Caco-2 (cell line): ENCODE measurements at regions of chr7 and their contacts with region 1.

Region 1: DNA sequence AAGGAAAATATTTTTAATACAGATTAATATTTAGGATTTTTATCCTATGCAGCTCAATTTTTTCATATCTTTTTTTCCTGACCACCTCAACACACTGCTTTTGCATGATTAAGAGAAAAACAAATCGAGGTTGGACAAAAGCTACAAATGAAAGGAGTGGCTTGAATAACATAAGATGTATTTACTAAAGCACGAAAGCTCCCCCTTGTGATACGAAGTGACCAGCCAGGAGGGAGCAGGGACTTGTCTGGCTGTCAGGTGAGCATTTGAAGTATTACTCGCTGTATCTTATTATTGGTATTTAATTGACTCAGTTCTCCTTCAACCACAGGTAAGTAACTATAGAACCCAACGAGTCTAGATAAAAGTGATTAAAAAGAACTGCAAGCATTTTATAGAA is 265.2 kb upstream of the PHF14 start:
- DNase-seq: peak; percentile 31 to 44
- H3K4me3 ChIP-seq: no peak overlapping the region
- H3K4me3 Mint-ChIP-seq: no peak overlapping the region
- H3K27ac Mint-ChIP-seq: no peak overlapping the region
- H3K4me1 ChIP-seq: no peaks in the 10 kb centered on the region
- H3K4me1 Mint-ChIP-seq: no peaks in the 10 kb centered on the region
- H3K27me3 ChIP-seq: no peaks in the 10 kb centered on the region
- H3K27me3 Mint-ChIP-seq: peaks cover 2% of the 10 kb centered on the region
- CTCF ChIP-seq: peak; percentile 46 to 64

Region 2: DNA sequence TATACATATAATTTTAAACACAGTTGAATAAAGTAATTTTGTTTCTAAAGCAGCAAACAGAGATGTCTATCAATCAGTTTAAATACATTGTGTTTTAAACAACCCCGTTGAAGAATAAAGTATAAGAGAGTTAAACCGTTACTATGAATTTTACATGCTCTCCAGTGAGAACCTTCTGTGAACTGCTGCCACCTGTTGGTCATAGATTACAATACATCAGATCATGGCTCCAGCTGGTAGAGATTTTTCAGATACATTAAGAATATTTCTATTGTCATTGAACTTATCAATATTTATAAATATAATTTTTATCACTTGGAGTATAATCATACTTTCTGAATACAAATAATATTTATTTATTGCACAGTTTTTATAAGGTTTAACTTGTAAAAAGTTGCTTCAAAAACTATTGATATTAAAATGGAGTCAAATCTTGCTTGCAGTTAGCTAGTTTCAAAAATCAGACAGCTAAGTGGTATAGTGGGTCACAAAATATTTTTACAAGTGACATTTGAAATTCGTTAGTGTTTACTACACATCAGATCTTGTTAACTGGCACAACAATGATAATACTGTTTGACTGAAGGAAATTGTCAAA is 295.9 kb before region 1 on chr7:
- CTCF ChIA-PET with region 1: no interaction called
- POLR2A ChIA-PET with region 1: no interaction called
- intact Hi-C with region 1: loop called (anchors 10 kb)
- DNase-seq: peak in 1 of 2 experiments; percentile 52
- H3K4me3 ChIP-seq: no peak overlapping the region
- H3K4me3 Mint-ChIP-seq: no peak overlapping the region
- H3K27ac Mint-ChIP-seq: no peak overlapping the region
- H3K4me1 ChIP-seq: no peaks in the 10 kb centered on the region
- H3K4me1 Mint-ChIP-seq: no peaks in the 10 kb centered on the region
- H3K27me3 ChIP-seq: no peaks in the 10 kb centered on the region
- H3K27me3 Mint-ChIP-seq: peaks cover 3% of the 10 kb centered on the region
- CTCF ChIP-seq: peak; percentile 48 to 69

Region 3: GRCh38 chr7:10475940-10476641 is 232.4 kb before region 1 on chr7:
- CTCF ChIA-PET with region 1: no interaction called
- POLR2A ChIA-PET with region 1: no interaction called
- intact Hi-C with region 1: loop called (anchors 1 kb)
- DNase-seq: no peak
- H3K4me3 ChIP-seq: no peak overlapping the region
- H3K4me3 Mint-ChIP-seq: no peak overlapping the region
- H3K27ac Mint-ChIP-seq: no peak overlapping the region
- H3K4me1 ChIP-seq: no peaks in the 10 kb centered on the region
- H3K4me1 Mint-ChIP-seq: no peaks in the 10 kb centered on the region
- H3K27me3 ChIP-seq: no peaks in the 10 kb centered on the region
- H3K27me3 Mint-ChIP-seq: peaks cover 6% of the 10 kb centered on the region
- CTCF ChIP-seq: no peak

Region 4: DNA sequence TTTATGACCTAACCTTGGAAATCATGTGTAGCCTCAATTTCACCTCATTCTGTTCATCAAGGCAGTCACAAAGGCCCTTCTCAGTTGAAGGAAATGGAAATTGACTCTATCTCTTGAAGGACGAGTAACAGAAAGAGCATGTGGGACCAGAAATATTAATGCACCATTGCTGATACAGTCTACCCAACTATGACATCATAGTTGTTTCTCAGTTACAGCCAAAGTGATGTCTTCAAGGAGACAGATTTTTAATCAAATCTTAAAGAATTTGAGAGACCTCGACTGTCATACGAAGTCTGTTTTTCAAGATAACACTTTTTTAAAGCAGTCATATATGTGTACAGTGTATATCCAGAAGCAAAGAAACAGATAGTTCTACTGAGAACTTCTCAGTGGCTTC is 70.5 kb before region 1 on chr7:
- CTCF ChIA-PET with region 1: no interaction called
- POLR2A ChIA-PET with region 1: no interaction called
- intact Hi-C with region 1: loop called (anchors 1 kb)
- DNase-seq: no peak
- H3K4me3 ChIP-seq: no peak overlapping the region
- H3K4me3 Mint-ChIP-seq: no peak overlapping the region
- H3K27ac Mint-ChIP-seq: no peak overlapping the region
- H3K4me1 ChIP-seq: no peaks in the 10 kb centered on the region
- H3K4me1 Mint-ChIP-seq: no peaks in the 10 kb centered on the region
- H3K27me3 ChIP-seq: no peaks in the 10 kb centered on the region
- H3K27me3 Mint-ChIP-seq: no peaks in the 10 kb centered on the region
- CTCF ChIP-seq: no peak

Region 5: DNA sequence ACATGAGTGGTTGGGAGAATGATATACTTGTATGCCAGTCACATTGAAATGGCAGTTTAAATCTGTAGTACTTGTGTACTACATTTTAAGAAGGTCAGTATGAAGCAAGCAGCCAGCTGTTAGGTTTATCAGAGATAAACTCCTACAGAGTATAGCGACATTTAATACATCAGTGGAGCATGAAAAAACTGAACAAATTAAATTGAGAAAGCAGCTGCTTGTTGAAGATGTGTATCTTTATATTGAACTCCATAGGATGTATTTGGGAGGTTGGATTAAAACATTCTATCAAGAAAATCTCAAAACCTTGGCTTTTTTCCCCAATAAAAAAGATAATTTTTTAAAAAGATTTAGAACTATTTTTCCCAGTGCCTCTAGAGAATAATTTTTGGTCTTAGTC is 313.0 kb after region 1 on chr7:
- CTCF ChIA-PET with region 1: no interaction called
- POLR2A ChIA-PET with region 1: no interaction called
- intact Hi-C with region 1: no loop called
- DNase-seq: no peak
- H3K4me3 ChIP-seq: no peak overlapping the region
- H3K4me3 Mint-ChIP-seq: no peak overlapping the region
- H3K27ac Mint-ChIP-seq: no peak overlapping the region
- H3K4me1 ChIP-seq: no peaks in the 10 kb centered on the region
- H3K4me1 Mint-ChIP-seq: no peaks in the 10 kb centered on the region
- H3K27me3 ChIP-seq: no peaks in the 10 kb centered on the region
- H3K27me3 Mint-ChIP-seq: no peaks in the 10 kb centered on the region
- CTCF ChIP-seq: no peak